ENCODE measurements at regions of chr12 and their contacts with region 1.

Region 1: GRCh38 chr12:57088459-57089248 is at the start of gene NAB2:
- DNase-seq: peak; percentile 95
- ATAC-seq: peak; percentile 49
- H3K4me3 Mint-ChIP-seq: peak within 1 kb of the TSS; percentile 93
- H3K27ac Mint-ChIP-seq: peak within 1 kb of the TSS; percentile 95
- H3K4me1 Mint-ChIP-seq: peaks cover 63% of the 10 kb centered on the region
- H3K27me3 Mint-ChIP-seq: no peaks in the 10 kb centered on the region
- total RNA-seq, gene NAB2: 46.8 to 48.6 TPM

Region 2: DNA sequence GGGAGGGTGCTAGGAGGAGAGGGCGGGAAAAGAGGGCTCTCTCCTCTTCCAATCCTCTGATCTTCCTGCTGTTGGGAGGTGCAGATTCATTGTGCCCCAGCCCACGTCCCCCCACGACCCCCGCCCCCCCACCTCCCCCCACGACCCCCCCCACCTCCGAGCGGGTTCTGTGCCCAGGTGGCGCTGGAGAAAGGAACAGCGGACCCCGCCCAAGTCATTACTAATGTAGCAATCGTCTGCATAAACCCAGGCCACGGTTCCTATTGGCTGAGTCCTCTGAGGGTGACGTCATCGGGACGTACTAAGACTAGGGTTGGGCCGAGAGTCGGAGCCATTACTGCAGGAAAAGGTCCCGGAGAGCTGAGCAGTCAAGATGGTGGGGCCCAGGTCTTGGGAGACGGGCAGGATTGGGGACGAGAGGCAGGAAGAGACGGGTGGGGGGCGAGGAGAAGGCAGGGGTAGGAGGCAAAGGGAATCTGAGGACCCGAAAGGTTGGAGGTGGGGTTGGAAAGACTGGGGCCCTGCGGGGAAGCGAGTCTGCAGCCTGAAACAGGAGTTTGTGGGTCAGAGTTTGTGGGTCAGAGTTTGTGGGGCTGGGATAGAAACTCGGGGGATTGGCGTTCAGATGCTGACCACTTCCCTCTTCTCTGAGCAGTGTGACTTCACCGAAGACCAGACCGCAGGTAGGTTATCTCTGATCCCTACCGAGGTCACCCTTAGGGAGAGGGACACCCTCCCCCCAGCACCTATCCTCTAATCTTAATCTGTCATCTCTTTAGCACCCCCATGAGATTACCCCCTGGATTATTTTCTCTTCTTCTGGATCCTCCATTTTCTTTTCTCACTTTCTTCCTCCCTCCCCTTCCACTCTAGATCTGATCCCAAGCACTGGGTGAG is 930.4 kb before region 1 on chr12 and contains the start of gene MYL6:
- CTCF ChIA-PET with region 1: no interaction called
- POLR2A ChIA-PET with region 1: no interaction called
- intact Hi-C with region 1: loop called in 1 of 2 experiments (anchors 10 kb)
- DNase-seq: peak; percentile 96
- ATAC-seq: peak; percentile 85
- H3K4me3 Mint-ChIP-seq: peak within 1 kb of the TSS; percentile 99
- H3K27ac Mint-ChIP-seq: peak within 1 kb of the TSS; percentile 96
- H3K4me1 Mint-ChIP-seq: peaks cover 30% of the 10 kb centered on the region
- H3K27me3 Mint-ChIP-seq: no peaks in the 10 kb centered on the region
- total RNA-seq, gene MYL6: 692 to 918 TPM

Region 3: DNA sequence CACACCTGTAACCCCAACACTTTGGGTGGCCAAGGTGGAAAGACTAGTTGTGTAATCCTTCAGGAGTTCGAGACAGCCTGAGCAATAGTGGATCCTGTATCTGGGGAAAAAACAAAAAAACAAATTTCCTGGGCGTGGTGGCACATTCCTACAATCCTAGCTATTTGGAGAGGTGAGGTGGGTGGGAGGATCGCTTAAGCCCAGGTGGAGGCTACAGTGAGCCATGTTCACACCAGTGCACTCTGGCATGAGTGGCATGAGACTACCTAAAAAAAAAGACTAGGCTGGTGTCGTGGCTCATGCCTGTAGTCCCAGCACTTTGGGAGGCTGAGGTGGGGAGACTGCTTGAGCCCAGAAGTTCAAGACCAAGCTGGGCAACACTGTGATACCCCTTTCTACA is 417.8 kb before region 1 on chr12:
- CTCF ChIA-PET with region 1: no interaction called
- POLR2A ChIA-PET with region 1: no interaction called
- intact Hi-C with region 1: no loop called
- DNase-seq: no peak
- ATAC-seq: no peak
- H3K4me3 Mint-ChIP-seq: no peak overlapping the region
- H3K27ac Mint-ChIP-seq: no peak overlapping the region
- H3K4me1 Mint-ChIP-seq: peaks cover 53% of the 10 kb centered on the region
- H3K27me3 Mint-ChIP-seq: no peaks in the 10 kb centered on the region

Region 4: DNA sequence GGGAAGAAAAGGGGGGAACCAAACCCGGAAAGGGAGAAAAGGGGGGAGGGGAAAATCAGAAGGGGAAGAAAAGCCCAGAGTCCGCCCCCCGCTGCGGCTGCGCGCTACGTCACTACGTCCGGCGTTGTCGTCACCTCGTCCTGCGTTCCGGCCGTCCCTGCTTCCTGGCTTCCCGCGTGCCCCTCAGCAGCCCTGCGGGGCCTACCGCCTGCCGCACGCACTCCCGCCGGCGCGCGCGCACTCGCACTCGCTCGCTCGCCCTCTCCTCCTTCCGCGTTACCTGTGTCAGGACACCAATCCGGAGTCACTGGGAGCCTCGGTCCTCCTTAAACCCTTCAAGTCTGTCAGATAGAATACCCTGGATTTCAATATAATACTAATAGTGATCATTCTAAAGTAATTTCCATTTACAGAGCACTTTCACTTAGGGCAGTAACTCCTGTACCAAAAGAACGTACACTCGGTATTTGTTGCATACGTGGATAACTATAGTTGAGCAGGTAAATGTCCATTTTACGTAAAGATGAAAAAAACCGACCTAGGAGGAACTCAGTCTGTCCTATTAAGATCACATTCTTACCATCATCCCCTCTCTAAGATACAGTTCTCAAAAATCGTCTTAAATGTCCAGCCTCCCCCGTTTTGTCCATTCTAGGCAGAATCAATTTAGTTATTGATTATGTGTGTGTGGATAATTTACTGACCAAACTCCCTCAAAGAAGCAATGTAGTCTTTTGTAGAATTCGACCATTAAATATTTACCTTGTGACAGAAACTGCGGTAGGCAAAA is 342.5 kb after region 1 on chr12 and contains the start of gene R3HDM2:
- CTCF ChIA-PET with region 1: no interaction called
- POLR2A ChIA-PET with region 1: no interaction called
- intact Hi-C with region 1: loop called in 1 of 2 experiments (anchors 5 kb)
- DNase-seq: peak; percentile 97
- ATAC-seq: peak; percentile 95
- H3K4me3 Mint-ChIP-seq: peak within 1 kb of the TSS; percentile 89
- H3K27ac Mint-ChIP-seq: peak within 1 kb of the TSS; percentile 100
- H3K4me1 Mint-ChIP-seq: peaks cover 35% of the 10 kb centered on the region
- H3K27me3 Mint-ChIP-seq: no peaks in the 10 kb centered on the region
- total RNA-seq, gene R3HDM2: 45.9 to 52.5 TPM

Region 5: GRCh38 chr12:57553343-57554202 is 464.9 kb after region 1 on chr12:
- CTCF ChIA-PET with region 1: no interaction called
- POLR2A ChIA-PET with region 1: no interaction called
- intact Hi-C with region 1: no loop called
- DNase-seq: no peak
- ATAC-seq: no peak
- H3K4me3 Mint-ChIP-seq: no peak overlapping the region
- H3K27ac Mint-ChIP-seq: no peak overlapping the region
- H3K4me1 Mint-ChIP-seq: peaks cover 11% of the 10 kb centered on the region
- H3K27me3 Mint-ChIP-seq: peaks cover 14% of the 10 kb centered on the region

Measured in activated CD4-positive, alpha-beta T cell treated with anti-CD3 and anti-CD28 coated beads for 36 hours (primary cell).